ENCODE measurements at regions of chr1 and their contacts with region 1.

Region 1: GRCh38 chr1:114219172-114219868 is 65.7 kb upstream of the SYT6 start:
- DNase-seq: no peak
- ATAC-seq: no peak
- H3K4me3 Mint-ChIP-seq: no peak overlapping the region
- H3K27ac Mint-ChIP-seq: no peak overlapping the region
- H3K4me1 Mint-ChIP-seq: peaks cover 4% of the 10 kb centered on the region
- H3K27me3 Mint-ChIP-seq: no peaks in the 10 kb centered on the region
- CTCF ChIP-seq: no peak

Region 2: GRCh38 chr1:114274621-114275317 is 55.4 kb after region 1 on chr1:
- CTCF ChIA-PET with region 1: no interaction called
- POLR2A ChIA-PET with region 1: no interaction called
- intact Hi-C with region 1: loop called (anchors 10 kb)
- DNase-seq: no peak
- ATAC-seq: no peak
- H3K4me3 Mint-ChIP-seq: no peak overlapping the region
- H3K27ac Mint-ChIP-seq: no peak overlapping the region
- H3K4me1 Mint-ChIP-seq: no peaks in the 10 kb centered on the region
- H3K27me3 Mint-ChIP-seq: no peaks in the 10 kb centered on the region
- CTCF ChIP-seq: no peak

Measured in activated CD8-positive, alpha-beta T cell treated with anti-CD3 and anti-CD28 coated beads for 36 hours (primary cell).